CD4-positive, alpha-beta memory T cell (primary cell): ENCODE measurements at regions of chr4 and their contacts with region 1.

Region 1: DNA sequence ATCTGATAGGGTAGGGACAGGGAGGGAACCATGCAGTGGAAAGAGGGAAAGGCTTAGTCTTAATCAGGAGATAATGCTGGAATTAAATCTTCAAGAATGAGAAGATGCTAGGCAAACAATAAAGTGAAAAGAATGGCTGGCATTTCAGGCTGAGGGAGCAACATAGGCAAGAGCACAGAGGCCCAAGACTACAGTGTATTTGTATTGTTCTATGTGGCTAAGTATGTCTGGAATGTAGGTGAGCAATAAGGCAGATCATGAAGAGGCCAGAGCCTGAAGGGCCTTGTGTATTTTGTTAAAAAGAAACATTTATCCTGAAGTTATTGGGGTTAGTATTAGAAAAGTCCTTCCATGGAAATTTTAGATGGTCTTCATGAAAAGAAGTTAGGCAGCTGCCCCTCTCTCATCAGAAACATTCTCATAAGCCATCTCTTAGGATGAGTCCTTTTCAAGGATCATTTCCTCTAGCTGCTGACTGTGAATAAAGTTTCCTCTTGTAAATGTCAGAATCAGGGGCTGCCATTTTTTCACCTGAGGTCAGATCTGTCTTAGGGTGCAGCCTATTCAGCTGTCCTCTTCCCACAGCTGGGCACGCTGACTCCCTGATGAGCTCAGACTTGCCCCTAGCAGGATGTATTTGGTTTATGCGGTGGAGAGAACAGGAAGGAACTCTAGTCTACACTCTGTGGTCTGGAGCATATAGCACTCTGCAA is 46.3 kb downstream of the ATP10D start:
- DNase-seq: peak; percentile 50 to 70 (median 61)
- H3K4me3 ChIP-seq: no peak overlapping the region
- H3K4me3 Mint-ChIP-seq: peak overlapping the region in 7 of 8 donors; percentile 18 to 82 (median 72)
- H3K27ac ChIP-seq: no peak overlapping the region
- H3K27ac Mint-ChIP-seq: peak overlapping the region in 6 of 7 donors; percentile 56 to 88 (median 76)
- H3K4me1 ChIP-seq: peaks cover 40% of the 10 kb centered on the region
- H3K4me1 Mint-ChIP-seq: peaks cover 35 to 47% (median 43%) of the 10 kb centered on the region in 4 donors
- H3K27me3 ChIP-seq: no peaks in the 10 kb centered on the region
- H3K27me3 Mint-ChIP-seq: no peaks in the 10 kb centered on the region

Region 2: GRCh38 chr4:47485047-47485692 is 46.2 kb before region 1 on chr4 and contains the start of gene ATP10D:
- CTCF ChIA-PET with region 1: no interaction called
- POLR2A ChIA-PET with region 1: interaction called, 4 read pairs
- intact Hi-C with region 1: loop called (anchors 5 kb)
- DNase-seq: peak; percentile 65 to 75 (median 67)
- H3K4me3 ChIP-seq: peak within 1 kb of the TSS; percentile 58 to 86
- H3K4me3 Mint-ChIP-seq: peak within 1 kb of the TSS; percentile 90 to 99 (median 95)
- H3K27ac ChIP-seq: peak within 1 kb of the TSS; percentile 46
- H3K27ac Mint-ChIP-seq: peak within 1 kb of the TSS; percentile 74 to 98 (median 94)
- H3K4me1 ChIP-seq: peaks cover 14% of the 10 kb centered on the region
- H3K4me1 Mint-ChIP-seq: peaks cover 7 to 32% (median 25%) of the 10 kb centered on the region in 4 donors
- H3K27me3 ChIP-seq: no peaks in the 10 kb centered on the region
- H3K27me3 Mint-ChIP-seq: no peaks in the 10 kb centered on the region
- total RNA-seq, gene ATP10D: 3.1 to 4.2 TPM